Psoas muscle (tissue), 8 donors: ENCODE measurements at regions of chr6 and their contacts with region 1.

Region 1: GRCh38 chr6:4281341-4282293 is 146.2 kb upstream of the ECI2 start:
- DNase-seq: peak; percentile 52 to 86
- ATAC-seq: peak; percentile 92 to 97 (median 94)
- H3K4me3 ChIP-seq: peak overlapping the region; percentile 53
- H3K27ac ChIP-seq: peak overlapping the region; percentile 24
- H3K4me1 ChIP-seq: no peaks in the 10 kb centered on the region
- H3K27me3 ChIP-seq: no peaks in the 10 kb centered on the region
- CTCF ChIP-seq: peak; percentile 54

Region 2: GRCh38 chr6:4351520-4352315 is 70.1 kb after region 1 on chr6:
- intact Hi-C with region 1: loop called (anchors 5 to 10 kb)
- DNase-seq: peak; percentile 86 to 91
- ATAC-seq: peak; percentile 87 to 96 (median 92)
- H3K4me3 ChIP-seq: peak overlapping the region; percentile 56
- H3K27ac ChIP-seq: peak overlapping the region; percentile 91
- H3K4me1 ChIP-seq: peaks cover 8% of the 10 kb centered on the region
- H3K27me3 ChIP-seq: no peaks in the 10 kb centered on the region
- CTCF ChIP-seq: no peak

Region 3: GRCh38 chr6:4358414-4359114 is 76.9 kb after region 1 on chr6:
- intact Hi-C with region 1: loop called (anchors 5 to 10 kb)
- DNase-seq: peak; percentile 94 to 97
- ATAC-seq: peak; percentile 96 to 98 (median 96)
- H3K4me3 ChIP-seq: peak overlapping the region; percentile 53
- H3K27ac ChIP-seq: peak overlapping the region; percentile 99
- H3K4me1 ChIP-seq: peaks cover 11% of the 10 kb centered on the region
- H3K27me3 ChIP-seq: no peaks in the 10 kb centered on the region
- CTCF ChIP-seq: no peak

Region 4: DNA sequence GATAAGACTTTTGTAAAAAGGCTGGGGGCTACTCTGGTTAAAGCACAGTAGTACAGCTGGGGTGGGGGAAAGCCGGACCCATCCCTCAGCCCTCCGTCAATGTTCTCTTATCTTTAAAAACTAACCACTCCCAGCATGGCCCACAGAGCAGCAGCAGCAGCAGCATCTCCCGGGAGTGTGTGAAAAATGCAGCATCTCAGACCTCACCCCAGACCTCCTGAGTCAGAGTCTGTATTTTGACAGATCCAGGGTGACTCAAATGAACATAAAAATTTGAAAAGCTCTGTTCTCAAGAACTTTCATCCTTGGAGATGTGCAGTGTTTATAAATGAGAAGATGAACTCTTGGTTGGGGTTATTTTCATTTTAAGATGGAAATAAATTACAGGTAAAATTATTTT is 131.5 kb after region 1 on chr6:
- intact Hi-C with region 1: no loop called
- DNase-seq: no peak
- ATAC-seq: no peak
- H3K4me3 ChIP-seq: no peak overlapping the region
- H3K27ac ChIP-seq: no peak overlapping the region
- H3K4me1 ChIP-seq: no peaks in the 10 kb centered on the region
- H3K27me3 ChIP-seq: no peaks in the 10 kb centered on the region
- CTCF ChIP-seq: no peak

Region 5: DNA sequence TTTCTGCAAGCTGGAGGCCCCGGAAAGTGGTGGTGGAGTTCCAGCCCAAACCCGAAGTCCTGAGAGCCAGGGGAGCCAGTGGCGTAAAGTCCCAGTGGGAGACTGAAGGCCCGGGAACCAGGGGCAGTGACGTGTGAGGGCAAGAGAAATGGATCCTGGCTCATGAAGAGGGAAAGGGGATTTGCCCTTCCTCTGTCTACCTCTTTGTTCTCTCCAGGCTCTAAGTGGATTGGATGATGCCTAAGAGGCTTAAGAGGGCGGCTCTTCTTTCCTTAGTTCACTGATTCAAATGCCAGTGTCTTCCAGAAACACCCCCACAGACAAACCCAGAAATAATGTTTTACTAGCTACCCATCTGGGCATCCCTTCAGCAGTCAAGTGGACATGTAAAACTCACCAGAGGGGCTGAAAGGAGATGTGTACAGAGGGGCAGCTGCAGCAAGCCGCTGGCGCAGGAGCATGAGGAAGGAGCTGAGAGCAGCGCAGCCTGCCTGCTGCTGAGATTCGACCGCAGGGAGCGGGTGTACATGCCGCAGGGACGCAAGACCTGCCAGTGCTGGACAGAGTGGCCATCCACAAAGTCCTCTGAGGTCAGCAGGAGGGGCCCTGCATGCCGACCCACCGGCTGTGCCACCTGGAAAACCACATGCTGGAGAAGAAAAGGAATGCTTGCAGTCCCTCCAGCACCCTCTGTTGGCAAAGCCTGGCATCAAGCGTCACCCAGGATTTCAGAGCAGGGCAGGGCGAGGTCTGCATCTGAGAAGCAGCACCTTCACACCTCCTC is 524.1 kb after region 1 on chr6:
- intact Hi-C with region 1: loop called in 1 of 2 experiments (anchors 10 kb)
- DNase-seq: peak; percentile 34 to 70
- ATAC-seq: peak; percentile 85 to 89 (median 88)
- H3K4me3 ChIP-seq: no peak overlapping the region
- H3K27ac ChIP-seq: no peak overlapping the region
- H3K4me1 ChIP-seq: peaks cover 39% of the 10 kb centered on the region
- H3K27me3 ChIP-seq: no peaks in the 10 kb centered on the region
- CTCF ChIP-seq: peak; percentile 57